Activated CD8-positive, alpha-beta memory T cell treated with anti-CD3 and anti-CD28 coated beads, Interleukin-2, amount 10 ng/mL, durations not matched to agents 7 days and 5 days (primary cell): ENCODE measurements at regions of chr15 and their contacts with region 1.

Region 1: DNA sequence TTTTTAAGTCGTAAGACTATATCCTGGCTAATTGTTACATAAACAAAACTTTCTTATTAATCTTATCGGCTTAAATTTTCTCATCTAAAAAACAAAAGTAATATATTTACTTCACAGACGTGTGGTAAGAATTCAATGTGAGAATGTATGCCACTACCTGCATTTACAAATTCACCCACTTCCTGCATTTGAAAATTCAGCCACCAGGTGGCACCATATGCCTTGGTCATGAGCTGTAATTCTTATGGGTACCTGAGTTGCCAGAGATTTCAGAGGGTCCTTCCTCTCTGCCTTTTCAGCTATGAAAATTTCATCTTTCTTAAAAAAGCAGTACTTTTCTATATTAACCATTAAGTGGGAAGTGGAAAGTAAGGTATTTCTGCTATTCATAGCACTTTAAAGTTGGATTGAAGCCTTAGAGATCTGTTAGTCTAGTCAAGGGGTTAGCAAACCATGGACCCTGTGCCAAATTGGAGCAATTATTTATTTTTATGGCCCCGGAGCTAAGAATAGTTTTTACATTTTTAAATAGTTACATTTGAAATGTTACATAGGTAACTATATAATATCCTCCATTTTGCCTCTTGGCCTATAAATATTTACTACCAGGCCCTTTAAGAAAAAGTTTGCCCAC is 127.8 kb downstream of the HCN4 start:
- DNase-seq: peak; percentile 85
- ATAC-seq: no peak
- H3K4me3 Mint-ChIP-seq: no peak overlapping the region
- H3K27ac Mint-ChIP-seq: no peak overlapping the region
- H3K4me1 Mint-ChIP-seq: peaks cover 13% of the 10 kb centered on the region
- H3K27me3 Mint-ChIP-seq: peaks cover 7% of the 10 kb centered on the region

Region 2: DNA sequence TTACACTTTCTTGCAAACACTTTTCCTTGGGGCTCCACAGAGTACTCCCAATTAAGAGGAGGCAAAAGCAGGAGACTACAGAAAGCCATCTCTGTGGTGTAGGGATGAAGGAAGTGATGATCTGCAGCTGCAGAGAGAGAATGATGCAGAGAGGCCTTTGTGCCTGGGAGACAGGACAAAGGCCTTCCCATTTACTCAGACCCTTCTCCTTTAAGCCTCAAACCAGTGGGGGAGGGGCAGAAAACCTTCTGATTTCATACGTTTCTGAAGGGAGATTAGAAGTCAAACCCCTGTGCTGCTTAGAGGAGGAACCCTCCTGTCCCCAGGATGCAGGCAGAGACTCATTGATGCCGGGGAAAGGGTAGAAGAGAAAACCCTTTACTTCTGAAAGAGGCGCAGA is 57.9 kb before region 1 on chr15:
- CTCF ChIA-PET with region 1: no interaction called
- DNase-seq: no peak
- ATAC-seq: no peak
- H3K4me3 Mint-ChIP-seq: no peak overlapping the region
- H3K27ac Mint-ChIP-seq: no peak overlapping the region
- H3K4me1 Mint-ChIP-seq: no peaks in the 10 kb centered on the region
- H3K27me3 Mint-ChIP-seq: no peaks in the 10 kb centered on the region

Region 3: GRCh38 chr15:73258271-73259108 is 17.5 kb after region 1 on chr15:
- CTCF ChIA-PET with region 1: interaction called, 110 read pairs
- DNase-seq: peak; percentile 66
- ATAC-seq: peak; percentile 90
- H3K4me3 Mint-ChIP-seq: no peak overlapping the region
- H3K27ac Mint-ChIP-seq: peak overlapping the region; percentile 25
- H3K4me1 Mint-ChIP-seq: peaks cover 17% of the 10 kb centered on the region
- H3K27me3 Mint-ChIP-seq: no peaks in the 10 kb centered on the region

Region 4: GRCh38 chr15:73265536-73266153 is 24.7 kb after region 1 on chr15:
- CTCF ChIA-PET with region 1: interaction called, 110 read pairs
- DNase-seq: peak; percentile 74
- ATAC-seq: peak; percentile 75
- H3K4me3 Mint-ChIP-seq: no peak overlapping the region
- H3K27ac Mint-ChIP-seq: no peak overlapping the region
- H3K4me1 Mint-ChIP-seq: no peaks in the 10 kb centered on the region
- H3K27me3 Mint-ChIP-seq: no peaks in the 10 kb centered on the region

Region 5: GRCh38 chr15:73273181-73274002 is 32.4 kb after region 1 on chr15:
- CTCF ChIA-PET with region 1: interaction called, 110 read pairs
- DNase-seq: peak; percentile 70
- ATAC-seq: peak; percentile 76
- H3K4me3 Mint-ChIP-seq: no peak overlapping the region
- H3K27ac Mint-ChIP-seq: no peak overlapping the region
- H3K4me1 Mint-ChIP-seq: peaks cover 2% of the 10 kb centered on the region
- H3K27me3 Mint-ChIP-seq: no peaks in the 10 kb centered on the region